Activated CD4-positive, alpha-beta memory T cell treated with anti-CD3 and anti-CD28 coated beads for 36 hours (primary cell): ENCODE measurements at regions of chr7 and their contacts with region 1.

Region 1: DNA sequence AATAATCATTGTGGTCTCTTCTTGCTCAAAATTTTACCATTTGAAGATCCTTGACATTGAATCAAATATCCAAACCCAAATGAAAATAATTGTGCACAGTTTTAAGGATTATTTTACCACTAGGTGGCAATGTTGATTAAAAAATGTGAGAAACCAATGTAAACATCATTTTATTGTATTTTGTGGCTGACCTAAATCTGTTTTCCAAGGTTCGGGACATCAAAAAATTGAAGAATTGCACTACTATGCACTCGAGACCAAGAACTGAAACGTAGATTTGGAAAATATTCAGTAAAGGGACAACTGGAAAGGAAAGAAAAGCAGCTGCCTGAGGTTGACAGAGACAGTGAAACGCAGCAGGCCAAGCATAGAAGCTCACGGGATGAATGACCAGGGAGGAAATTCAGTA is 259.3 kb downstream of the SNX13 start:
- DNase-seq: no peak
- H3K4me3 Mint-ChIP-seq: no peak overlapping the region
- H3K27ac Mint-ChIP-seq: no peak overlapping the region
- H3K4me1 Mint-ChIP-seq: no peaks in the 10 kb centered on the region
- H3K27me3 Mint-ChIP-seq: peaks cover 2% of the 10 kb centered on the region

Region 2: GRCh38 chr7:17608114-17608833 is 72.7 kb before region 1 on chr7:
- CTCF ChIA-PET with region 1: no interaction called
- POLR2A ChIA-PET with region 1: no interaction called
- intact Hi-C with region 1: no loop called
- DNase-seq: no peak
- H3K4me3 Mint-ChIP-seq: no peak overlapping the region
- H3K27ac Mint-ChIP-seq: no peak overlapping the region
- H3K4me1 Mint-ChIP-seq: no peaks in the 10 kb centered on the region
- H3K27me3 Mint-ChIP-seq: peaks cover 9% of the 10 kb centered on the region

Region 3: DNA sequence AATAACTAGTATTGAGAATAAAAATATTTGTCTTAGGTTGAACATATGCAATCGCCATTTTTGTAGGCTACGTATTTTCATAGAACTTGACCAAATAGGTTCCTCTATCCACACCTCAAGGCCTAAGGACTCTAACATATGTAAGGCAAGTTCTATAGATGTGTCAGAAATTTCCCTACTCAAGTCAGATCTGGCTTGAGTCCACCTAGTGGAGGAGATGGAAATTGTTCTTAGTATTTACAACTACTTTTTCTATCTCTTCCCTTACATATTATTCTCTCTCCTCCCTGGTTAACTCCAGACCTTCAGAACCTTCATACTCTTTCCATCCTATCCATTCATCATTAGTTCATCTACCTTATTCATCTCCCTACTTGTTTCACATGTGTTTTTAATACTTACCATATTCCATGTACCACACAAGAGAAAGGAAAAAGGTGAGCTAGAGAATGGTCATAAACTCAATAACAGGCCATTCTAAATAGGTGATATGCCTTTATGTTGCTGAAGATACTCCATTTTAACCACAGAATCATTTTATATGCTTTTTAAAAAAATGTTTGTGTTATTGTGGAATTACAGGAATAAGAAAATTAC is 640.1 kb after region 1 on chr7:
- CTCF ChIA-PET with region 1: interaction called, 8 read pairs
- POLR2A ChIA-PET with region 1: no interaction called
- intact Hi-C with region 1: loop called (anchors 2 kb)
- DNase-seq: no peak
- H3K4me3 Mint-ChIP-seq: no peak overlapping the region
- H3K27ac Mint-ChIP-seq: no peak overlapping the region
- H3K4me1 Mint-ChIP-seq: no peaks in the 10 kb centered on the region
- H3K27me3 Mint-ChIP-seq: peaks cover 4% of the 10 kb centered on the region

Region 4: DNA sequence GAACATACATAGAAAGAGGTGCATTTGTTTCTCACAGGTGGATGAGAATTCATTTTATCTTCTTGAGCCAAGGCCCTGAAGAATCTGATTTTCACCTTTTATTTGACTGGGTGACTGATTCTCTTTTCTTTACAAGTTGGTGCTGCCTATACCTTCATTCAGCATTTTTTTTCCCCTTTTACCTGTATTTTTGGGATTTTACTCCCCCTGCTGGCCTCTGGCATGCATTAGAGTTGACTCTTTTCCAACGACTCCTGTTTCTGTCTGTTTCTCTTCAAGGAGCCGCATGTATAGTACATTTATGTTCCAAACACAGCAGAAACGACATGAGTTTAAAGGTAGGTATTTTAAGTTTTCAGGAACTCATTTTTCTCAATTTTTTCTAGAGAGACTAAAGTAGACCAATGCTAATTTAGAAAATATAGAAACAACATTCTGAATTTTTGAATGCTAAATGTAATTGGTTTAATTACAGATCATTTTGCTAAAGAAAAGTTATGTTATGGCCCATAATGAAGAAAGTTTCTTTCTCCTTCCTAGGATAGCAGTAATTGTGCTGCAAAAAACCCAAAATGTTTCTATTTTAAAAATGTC is 664.8 kb after region 1 on chr7:
- CTCF ChIA-PET with region 1: interaction called, 11 read pairs
- POLR2A ChIA-PET with region 1: no interaction called
- intact Hi-C with region 1: loop called (anchors 1 kb)
- DNase-seq: peak; percentile 20
- H3K4me3 Mint-ChIP-seq: no peak overlapping the region
- H3K27ac Mint-ChIP-seq: no peak overlapping the region
- H3K4me1 Mint-ChIP-seq: no peaks in the 10 kb centered on the region
- H3K27me3 Mint-ChIP-seq: peaks cover 5% of the 10 kb centered on the region

Region 5: DNA sequence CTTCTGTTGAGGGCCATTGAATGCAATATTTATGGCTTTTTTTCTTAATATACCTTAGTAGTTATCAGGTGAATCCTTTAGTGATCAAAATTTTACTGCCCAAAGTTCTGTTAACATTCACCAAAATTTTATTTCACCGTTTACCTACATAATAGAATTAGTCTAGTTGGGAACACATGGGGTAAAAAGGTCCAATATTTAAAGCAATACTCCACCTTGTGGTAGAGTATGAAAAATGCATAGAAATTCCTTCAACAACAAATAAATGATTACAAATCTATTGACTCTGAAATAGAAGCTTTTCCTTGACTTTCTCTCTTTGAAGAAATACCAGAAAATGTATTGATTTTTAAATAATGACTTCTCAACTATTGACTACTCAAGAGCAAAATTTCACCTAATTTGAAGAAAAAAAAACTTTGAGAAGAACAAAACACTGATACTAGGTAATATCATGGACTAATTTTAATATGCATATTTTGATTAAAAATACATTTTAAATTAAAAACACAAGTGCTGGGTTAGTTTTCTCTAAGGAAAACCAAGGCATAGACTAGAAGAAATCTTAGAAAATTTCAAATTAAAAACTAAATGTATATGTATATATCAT is 1984.6 kb after region 1 on chr7:
- CTCF ChIA-PET with region 1: no interaction called
- POLR2A ChIA-PET with region 1: no interaction called
- intact Hi-C with region 1: loop called (anchors 5 kb)
- DNase-seq: no peak
- H3K4me3 Mint-ChIP-seq: no peak overlapping the region
- H3K27ac Mint-ChIP-seq: no peak overlapping the region
- H3K4me1 Mint-ChIP-seq: peaks cover 5% of the 10 kb centered on the region
- H3K27me3 Mint-ChIP-seq: no peaks in the 10 kb centered on the region